Naive thymus-derived CD8-positive, alpha-beta T cell (primary cell): ENCODE measurements at regions of chr6 and their contacts with region 1.

Region 1: DNA sequence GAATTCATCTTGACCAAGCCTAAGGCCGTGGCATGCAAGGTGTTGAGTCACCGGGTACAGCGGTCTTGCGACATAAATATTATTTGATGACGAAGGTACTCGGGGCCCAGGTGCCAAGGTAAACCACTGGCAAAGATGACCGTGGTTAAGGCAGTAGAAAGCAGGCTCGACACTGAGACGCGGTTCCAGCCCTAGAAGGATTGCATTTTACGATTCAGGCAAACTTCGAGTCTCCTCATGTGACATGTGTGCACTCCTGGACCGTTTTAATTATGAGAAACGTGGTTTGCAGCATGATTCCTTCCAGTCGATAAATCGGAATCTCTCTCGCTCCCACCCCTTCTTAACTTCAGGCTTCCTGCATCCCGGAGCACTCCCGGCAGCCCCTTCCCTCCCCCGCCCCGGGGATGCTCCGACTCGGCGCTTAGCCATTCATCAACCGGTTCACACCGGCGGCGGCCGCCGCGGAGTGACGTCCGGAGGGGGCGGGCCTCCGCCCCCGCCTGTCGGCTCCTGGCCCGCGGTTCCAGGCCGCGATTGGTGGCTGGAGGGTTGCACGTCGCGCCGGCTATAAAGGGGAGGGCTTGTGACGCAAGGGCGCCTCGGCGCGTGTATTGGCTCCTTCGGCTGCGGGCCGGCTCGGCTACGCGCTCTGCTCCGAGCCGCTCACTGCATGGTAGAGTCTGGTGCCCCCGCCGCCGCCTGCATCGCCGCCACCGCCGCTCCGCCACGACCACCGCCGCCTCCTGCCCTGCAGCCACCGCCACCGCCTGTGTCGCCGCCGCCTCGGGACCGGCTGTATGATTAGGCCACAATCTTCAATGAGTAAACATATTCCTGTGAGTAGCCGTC is at the starts of genes LOC128125822 and PTP4A1:
- DNase-seq: peak; percentile 93 to 99 (median 97)
- ATAC-seq: peak; percentile 84 to 88
- H3K4me3 Mint-ChIP-seq: peak within 1 kb of the TSS; percentile 88 to 96 (median 93)
- H3K27ac Mint-ChIP-seq: peak within 1 kb of the TSS; percentile 95 to 100 (median 98)
- H3K4me1 Mint-ChIP-seq: peaks cover 13 to 41% (median 38%) of the 10 kb centered on the region in 4 donors
- H3K27me3 Mint-ChIP-seq: no peaks in the 10 kb centered on the region
- polyA plus RNA-seq, gene PTP4A1: 36.1 to 53.1 (median 36.9) TPM

Region 2: GRCh38 chr6:63598049-63599036 is 26.2 kb after region 1 on chr6:
- POLR2A ChIA-PET with region 1: interaction called, 15 read pairs
- DNase-seq: peak; percentile 47 to 88 (median 73)
- ATAC-seq: peak; percentile 99 to 100
- H3K4me3 Mint-ChIP-seq: peak overlapping the region; percentile 79 to 91 (median 88)
- H3K27ac Mint-ChIP-seq: peak overlapping the region in 8 of 10 donors; percentile 0 to 76 (median 36)
- H3K4me1 Mint-ChIP-seq: peaks cover 9 to 19% (median 16%) of the 10 kb centered on the region in 4 donors
- H3K27me3 Mint-ChIP-seq: peaks cover 0 to 4% (median 0%) of the 10 kb centered on the region in 5 donors

Region 3: DNA sequence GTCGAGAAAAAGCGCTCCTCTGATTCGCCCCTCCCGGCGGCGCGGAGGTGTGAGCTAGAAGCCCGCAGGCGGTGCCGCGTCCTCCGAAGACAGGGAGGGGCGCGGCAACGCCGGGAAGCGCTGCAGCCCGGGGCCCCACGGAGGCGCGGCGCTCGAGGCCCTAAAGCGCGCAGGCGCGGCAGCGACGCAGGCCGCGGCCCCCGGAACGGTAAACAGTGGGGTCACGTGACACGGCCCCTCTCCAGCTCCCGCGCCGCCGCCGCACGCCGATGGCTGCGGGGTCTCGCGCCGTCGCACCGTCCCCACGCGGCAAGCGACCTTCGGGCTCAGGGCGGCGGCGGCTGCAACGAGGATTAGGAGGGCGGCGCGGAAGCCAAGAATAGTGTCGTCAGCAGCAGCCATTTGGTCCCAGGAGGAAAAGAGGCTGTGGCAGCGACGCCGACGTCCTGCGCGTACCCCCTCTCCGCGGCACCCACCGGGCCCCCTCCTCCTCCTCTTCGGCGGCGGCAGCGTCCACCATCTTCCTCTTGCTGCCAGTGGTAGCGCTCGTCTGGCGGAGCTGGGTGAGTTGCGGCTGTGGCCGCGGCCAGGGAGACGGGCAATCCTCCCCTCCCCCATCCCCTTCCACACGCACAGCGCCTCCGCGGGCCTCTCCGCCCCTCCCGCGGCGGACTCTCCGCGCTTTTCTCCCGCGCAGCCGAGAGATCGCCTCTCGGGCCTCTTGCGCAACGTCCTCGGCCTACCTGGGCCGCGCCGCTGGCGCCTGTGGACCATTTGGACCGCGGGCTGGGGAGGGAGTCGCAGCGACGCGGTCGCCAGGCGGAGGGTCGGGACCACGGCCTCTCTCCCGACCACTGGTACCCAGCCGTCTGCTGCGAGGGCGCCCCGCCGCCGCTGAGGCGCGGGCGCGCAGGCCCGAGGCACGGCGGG is 63.7 kb after region 1 on chr6 and contains the start of gene PHF3:
- POLR2A ChIA-PET with region 1: interaction called, 48 read pairs
- DNase-seq: peak; percentile 89 to 95 (median 92)
- ATAC-seq: peak; percentile 89 to 90
- H3K4me3 Mint-ChIP-seq: peak within 1 kb of the TSS; percentile 96 to 100 (median 99)
- H3K27ac Mint-ChIP-seq: peak within 1 kb of the TSS; percentile 93 to 100 (median 99)
- H3K4me1 Mint-ChIP-seq: peaks cover 17 to 51% (median 48%) of the 10 kb centered on the region in 4 donors
- H3K27me3 Mint-ChIP-seq: peaks cover 0 to 3% (median 0%) of the 10 kb centered on the region in 5 donors
- polyA plus RNA-seq, gene PHF3: 23.7 to 38.6 (median 28.9) TPM